Left cardiac atrium (tissue), 4 donors: ENCODE measurements at regions of chr18 and their contacts with region 1.

Region 1: DNA sequence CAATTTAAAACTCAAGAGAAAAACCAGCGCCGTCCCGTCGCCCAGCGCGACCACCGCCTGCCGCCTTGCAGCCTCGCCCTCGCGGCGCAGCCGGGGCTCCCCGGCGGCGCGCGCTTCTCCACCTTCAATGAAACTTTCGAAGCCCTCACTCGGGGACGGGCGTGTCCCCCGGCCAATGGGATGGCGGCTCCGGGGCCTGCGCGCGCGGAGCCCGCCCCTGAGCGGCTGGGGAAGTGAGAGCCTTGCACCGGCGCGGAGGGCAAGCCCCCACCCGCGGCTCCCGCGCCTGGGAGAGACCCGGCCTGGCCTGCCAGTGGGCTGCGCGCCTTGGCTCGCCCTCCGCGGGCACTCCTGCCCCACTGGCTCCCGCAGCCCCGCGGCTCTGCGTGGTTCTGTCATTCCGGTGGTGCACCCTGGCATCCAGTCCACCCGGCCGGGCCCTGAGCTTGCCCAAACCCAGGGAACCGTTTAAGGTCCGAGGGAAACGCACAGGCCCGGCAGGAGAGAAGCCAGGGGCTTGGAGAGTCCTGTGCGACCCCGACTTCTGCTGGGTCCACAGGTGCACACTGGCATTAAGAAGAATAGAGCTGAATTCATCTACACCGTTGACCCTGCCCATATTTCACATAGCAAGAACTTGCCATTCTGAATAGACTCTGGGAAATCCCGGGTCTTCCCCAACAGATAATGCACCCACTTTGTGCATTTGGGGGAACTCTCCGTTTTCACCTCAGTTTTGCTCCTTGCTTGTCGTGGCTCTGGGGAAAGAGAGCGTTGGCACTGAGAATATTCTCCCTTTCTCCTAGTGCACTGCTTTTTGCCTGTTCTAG is at the start of gene PIEZO2:
- DNase-seq: peak; percentile 67
- ATAC-seq: peak; percentile 81 to 95
- total RNA-seq, gene PIEZO2: 1.7 to 2.1 TPM

Region 2: DNA sequence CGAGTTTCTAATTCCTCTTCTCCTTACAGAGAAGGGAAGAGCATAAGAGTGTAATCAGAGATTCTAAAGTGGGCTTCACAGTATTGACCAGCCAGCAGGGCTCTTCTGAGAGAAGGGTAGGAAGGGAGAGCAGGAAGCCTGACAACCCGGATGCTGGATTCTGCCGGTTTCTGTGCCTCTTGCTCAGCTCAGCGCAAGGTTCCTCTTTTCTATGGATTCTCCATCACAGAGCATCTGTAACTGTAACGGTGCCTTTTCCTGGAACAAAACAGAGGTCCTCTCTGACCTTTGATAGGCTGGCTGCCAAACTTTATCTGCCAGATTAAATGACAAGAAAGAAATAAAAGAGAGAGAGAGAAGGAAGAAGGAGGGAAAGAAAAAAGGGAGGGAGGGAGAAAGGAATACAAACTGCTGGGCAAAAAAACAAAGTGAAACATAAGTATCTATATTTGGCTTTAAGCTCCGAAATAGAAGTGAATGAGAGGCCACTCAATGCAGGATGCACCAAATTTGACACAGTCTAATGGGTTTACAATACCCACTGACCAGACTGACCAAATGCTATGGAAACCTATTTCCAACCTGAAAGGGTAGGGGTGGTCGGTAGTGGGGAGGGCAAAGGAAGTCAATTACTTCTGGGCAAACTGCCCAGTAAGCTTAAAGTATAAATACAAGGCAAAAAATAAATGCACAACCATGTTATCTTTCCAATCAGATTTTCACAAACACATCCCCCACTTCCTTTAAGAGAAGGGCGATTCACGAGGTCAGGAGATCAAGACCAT is 59.5 kb before region 1 on chr18:
- intact Hi-C with region 1: loop called in 1 of 2 experiments (anchors 10 kb)
- DNase-seq: no peak
- ATAC-seq: no peak